Prostate gland (tissue), 2 donors: ENCODE measurements at regions of chr1 and their contacts with region 1.

Region 1: DNA sequence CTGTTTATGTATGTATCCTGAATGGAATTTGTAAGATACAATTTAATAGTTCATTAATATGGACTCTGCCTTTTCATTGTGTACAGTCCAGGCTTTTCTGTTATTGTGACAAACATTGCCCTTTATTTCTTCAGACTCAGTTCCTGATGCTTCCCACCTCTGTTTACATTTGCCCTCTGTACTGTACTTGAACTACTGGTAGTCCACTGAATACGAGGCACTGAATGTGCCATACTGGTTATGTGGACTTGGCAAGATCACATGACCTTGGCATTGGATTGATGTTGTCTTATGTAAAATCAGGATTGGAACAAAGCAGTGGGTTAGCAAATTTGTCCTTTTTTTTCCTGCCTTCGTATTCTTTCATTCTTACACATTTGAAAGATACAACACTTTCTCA is 27.8 kb downstream of the RALGPS2 start:
- DNase-seq: peak; percentile 23
- H3K4me3 ChIP-seq: no peak overlapping the region
- H3K27ac ChIP-seq: no peak overlapping the region
- H3K4me1 ChIP-seq: peaks cover 2% of the 10 kb centered on the region
- H3K27me3 ChIP-seq: no peaks in the 10 kb centered on the region
- CTCF ChIP-seq: no peak
- POLR2A ChIP-seq: no peak

Region 2: DNA sequence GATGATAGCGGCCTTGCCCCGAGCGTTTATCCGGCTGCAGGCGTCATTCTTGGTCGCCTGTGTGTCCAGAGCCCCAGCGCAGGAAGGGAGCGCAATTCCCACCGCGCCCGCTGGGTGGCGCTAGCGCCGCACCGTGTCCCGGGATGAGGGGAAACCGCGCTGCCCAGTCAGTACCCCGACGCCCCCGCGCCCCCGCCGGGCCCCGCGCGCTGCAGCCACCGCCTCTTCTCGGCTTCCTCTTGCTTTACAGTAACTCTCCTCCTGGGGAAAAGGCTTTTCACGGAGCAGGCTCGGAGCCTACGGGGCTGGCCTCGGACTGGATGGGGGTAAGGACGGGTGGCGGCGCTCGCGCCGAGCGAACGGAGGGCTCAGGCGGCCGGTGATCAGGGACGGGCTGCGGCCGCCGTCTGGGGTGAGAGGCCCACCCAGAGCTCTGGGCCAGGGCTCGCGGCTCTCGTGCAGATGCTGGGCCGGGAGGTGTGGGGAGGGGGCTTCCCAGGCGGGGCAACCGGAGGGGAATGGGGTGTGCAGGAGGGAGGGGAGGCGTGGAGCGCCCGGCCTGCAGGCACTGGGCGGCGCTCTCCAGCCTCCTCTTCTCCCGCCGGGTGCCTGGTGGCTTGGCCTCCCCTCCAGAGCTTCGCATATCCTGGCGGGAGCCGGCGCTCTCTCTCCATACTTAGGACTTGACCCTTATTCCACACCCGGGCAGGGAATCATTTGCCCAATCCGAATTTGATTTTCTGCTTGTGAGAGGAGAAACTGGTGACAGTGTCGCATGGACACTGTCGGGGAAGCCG is 210.1 kb before region 1 on chr1:
- intact Hi-C with region 1: loop called (anchors 1 kb)
- DNase-seq: peak; percentile 80
- H3K4me3 ChIP-seq: peak overlapping the region; percentile 59 to 67
- H3K27ac ChIP-seq: peak overlapping the region; percentile 74 to 78
- H3K4me1 ChIP-seq: no peaks in the 10 kb centered on the region
- H3K27me3 ChIP-seq: no peaks in the 10 kb centered on the region
- CTCF ChIP-seq: peak; percentile 94 to 99 (median 97)
- POLR2A ChIP-seq: no peak

Region 3: DNA sequence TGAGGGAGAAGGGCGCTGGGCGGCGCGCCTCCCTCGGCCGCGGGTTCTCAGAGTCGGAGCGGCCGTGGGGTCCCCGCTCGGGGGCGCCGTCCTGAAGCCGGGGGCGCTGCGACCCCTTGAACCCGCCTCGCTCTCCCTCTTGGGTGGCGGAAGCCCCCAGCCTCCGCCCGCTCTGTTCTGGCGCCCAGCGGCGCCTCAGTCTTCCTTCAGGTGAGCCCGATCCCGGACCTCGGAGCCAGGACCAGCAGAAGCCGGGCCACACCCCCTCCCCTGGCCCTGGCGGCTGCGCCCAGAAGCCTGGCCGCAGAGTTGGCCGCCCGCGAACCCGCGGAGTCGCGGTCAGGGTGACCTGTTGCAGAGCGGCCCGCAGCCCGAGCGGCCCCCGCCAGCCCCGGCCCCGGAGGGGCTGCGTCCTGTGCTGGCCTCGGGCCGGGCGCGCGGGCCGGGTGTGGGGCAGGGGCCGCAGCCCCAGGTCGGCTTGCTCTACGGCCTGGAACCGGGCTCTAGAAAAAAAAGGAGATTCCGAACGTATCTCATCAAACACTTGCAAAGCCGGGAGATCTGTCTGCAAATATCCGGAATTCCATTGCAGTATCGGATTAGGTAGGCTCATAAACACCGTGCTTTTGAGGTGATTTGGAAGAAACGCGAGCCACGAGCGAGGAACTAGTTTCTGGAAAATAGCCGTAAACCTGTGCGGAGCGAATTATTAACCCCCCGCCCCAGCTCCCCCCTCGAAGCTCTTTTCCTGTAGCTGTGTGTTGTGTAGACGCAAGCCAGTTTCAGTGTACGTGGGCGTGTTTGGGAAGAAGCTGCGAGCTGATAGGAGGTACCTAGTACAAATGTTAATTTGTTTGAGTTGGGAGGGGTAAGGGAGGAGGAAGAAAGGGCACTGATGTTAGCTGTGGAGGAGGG is 27.0 kb before region 1 on chr1:
- intact Hi-C with region 1: loop called (anchors 2 kb)
- DNase-seq: peak; percentile 87
- H3K4me3 ChIP-seq: peak overlapping the region; percentile 92 to 95
- H3K27ac ChIP-seq: peak overlapping the region; percentile 96 to 97
- H3K4me1 ChIP-seq: no peaks in the 10 kb centered on the region
- H3K27me3 ChIP-seq: no peaks in the 10 kb centered on the region
- CTCF ChIP-seq: peak in 2 of 4 experiments; percentile 19 to 31
- POLR2A ChIP-seq: peak; percentile 64